Dorsolateral prefrontal cortex (tissue), 120 donors: ENCODE measurements at regions of chr12 and their contacts with region 1.

Region 1: DNA sequence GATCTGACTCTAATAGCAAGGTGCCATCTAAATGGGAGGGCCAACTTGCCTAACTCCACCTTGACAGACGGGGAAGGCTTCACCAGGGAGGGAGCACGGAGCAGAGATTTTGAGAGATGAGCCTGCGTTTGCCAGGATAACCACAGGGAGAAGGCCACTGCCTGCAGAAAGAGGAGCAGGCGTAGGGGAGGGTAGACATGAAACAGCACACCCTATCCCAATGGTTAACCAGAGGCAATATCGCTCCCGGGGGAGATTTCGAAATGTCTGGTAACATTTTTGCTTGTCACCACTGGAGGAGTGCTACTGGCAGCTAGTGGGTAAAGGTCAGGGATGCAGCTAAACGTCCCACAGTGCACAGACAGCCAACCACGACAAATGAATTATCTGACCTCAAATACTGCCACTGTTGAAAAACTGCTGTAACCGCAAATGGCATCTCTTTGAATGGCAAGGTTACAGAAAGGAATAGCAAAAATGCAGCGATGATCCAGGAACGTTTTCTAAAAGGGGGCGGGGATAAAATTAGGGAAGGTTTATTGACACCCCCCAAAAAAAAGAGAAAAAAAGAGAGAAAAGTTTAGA is 126.0 kb upstream of the ATF7IP start:
- DNase-seq: peak in 1 of 10 donors; percentile 12
- H3K4me3 ChIP-seq: peak overlapping the region in 13 of 59 donors; percentile 0 to 34 (median 12)
- H3K27ac ChIP-seq: peak overlapping the region in 17 of 59 donors; percentile 1 to 46 (median 25)
- H3K27me3 ChIP-seq: no peaks in the 10 kb centered on the region
- CTCF ChIP-seq: peak in 4 of 56 donors; percentile 3 to 27 (median 14)

Region 2: GRCh38 chr12:14099994-14100393 is 139.4 kb before region 1 on chr12:
- intact Hi-C with region 1: no loop called
- DNase-seq: no peak
- H3K4me3 ChIP-seq: no peak overlapping the region
- H3K27ac ChIP-seq: no peak overlapping the region
- H3K27me3 ChIP-seq: no peaks in the 10 kb centered on the region
- CTCF ChIP-seq: no peak

Region 3: GRCh38 chr12:14207905-14208551 is 31.4 kb before region 1 on chr12:
- intact Hi-C with region 1: no loop called
- DNase-seq: no peak
- H3K4me3 ChIP-seq: no peak overlapping the region
- H3K27ac ChIP-seq: no peak overlapping the region
- H3K27me3 ChIP-seq: no peaks in the 10 kb centered on the region
- CTCF ChIP-seq: no peak

Region 4: GRCh38 chr12:14554281-14555007 is 315.0 kb after region 1 on chr12:
- intact Hi-C with region 1: loop called in 1 of 2 experiments (anchors 10 kb)
- DNase-seq: peak in 9 of 10 donors; percentile 27 to 71 (median 54)
- H3K4me3 ChIP-seq: peak overlapping the region in 18 of 59 donors; percentile 1 to 40 (median 16)
- H3K27ac ChIP-seq: peak overlapping the region in 31 of 59 donors; percentile 4 to 74 (median 40)
- H3K27me3 ChIP-seq: no peaks in the 10 kb centered on the region
- CTCF ChIP-seq: peak in 37 of 56 donors; percentile 2 to 56 (median 23)

Region 5: GRCh38 chr12:14618983-14619382 is 379.5 kb after region 1 on chr12:
- intact Hi-C with region 1: loop called (anchors 5 to 10 kb)
- DNase-seq: peak in 1 of 10 donors; percentile 19
- H3K4me3 ChIP-seq: no peak overlapping the region
- H3K27ac ChIP-seq: no peak overlapping the region
- H3K27me3 ChIP-seq: no peaks in the 10 kb centered on the region
- CTCF ChIP-seq: peak in 54 of 56 donors; percentile 19 to 72 (median 46)

Region 6: DNA sequence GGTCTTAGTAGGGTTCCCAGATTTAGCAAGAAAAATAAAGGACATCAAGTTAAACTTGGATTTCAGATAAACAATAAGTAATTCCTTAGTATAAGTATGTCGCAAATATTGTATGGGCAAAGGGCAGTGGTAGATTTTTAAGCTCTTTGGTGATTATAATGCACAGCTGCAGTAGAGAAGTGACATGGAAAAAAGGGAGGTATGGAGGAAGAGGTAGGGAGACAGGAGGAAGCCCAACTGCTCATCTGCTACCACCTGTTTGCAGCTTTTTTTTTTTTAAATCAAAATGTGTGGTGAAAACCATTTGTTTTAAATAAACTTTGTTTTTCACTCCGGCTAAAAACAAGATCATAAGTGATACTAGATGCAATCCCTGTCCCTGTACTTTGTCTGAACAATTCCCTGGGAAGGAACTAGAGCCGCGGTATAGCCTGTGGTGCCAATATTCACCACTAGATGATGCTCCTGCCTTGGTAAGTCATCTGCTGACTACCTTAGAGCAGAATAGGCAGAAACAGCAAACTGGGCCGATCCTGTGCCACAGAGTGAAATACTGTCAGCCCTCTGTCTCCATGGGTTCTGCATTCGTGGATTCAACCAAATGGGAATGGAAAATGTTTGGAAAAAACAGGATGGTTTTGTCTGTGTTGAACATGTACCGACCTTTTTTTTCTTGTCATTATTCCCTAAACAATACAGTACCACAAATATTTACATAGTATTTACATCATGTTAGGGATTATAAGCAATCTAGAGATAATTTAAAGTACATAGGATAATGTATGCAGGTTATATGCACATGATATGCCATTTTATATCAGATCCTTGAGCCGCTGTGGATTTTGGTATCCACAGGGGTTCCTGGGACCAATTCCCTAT is 390.6 kb after region 1 on chr12:
- intact Hi-C with region 1: loop called in 1 of 2 experiments (anchors 10 kb)
- DNase-seq: peak in 9 of 10 donors; percentile 52 to 80 (median 63)
- H3K4me3 ChIP-seq: no peak overlapping the region
- H3K27ac ChIP-seq: no peak overlapping the region
- H3K27me3 ChIP-seq: no peaks in the 10 kb centered on the region
- CTCF ChIP-seq: peak; percentile 41 to 96 (median 83)

Region 7: DNA sequence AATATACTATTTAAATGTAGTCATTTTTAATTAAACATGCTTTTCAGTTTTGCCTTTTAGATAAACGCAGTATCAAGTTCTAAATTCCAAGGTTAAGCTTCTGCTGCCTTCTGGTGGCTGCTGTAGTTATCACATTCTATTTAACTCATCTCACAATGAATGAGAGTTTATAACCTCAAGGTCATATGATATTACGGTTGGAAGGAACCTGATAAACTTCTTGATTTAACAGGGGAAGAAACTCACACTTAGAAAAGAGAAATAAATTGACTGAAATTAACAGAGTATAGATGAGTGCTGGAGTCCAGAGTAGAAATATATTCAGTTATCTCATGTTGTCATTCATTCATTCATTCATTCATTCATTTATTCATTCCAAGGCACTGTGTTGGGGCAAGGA is 425.1 kb after region 1 on chr12:
- intact Hi-C with region 1: loop called (anchors 5 kb)
- DNase-seq: peak in 2 of 10 donors; percentile 9 to 21
- H3K4me3 ChIP-seq: no peak overlapping the region
- H3K27ac ChIP-seq: no peak overlapping the region
- H3K27me3 ChIP-seq: no peaks in the 10 kb centered on the region
- CTCF ChIP-seq: peak; percentile 31 to 82 (median 65)